Heart right ventricle (tissue), 16 donors: ENCODE measurements at regions of chr9 and their contacts with region 1.

Region 1: GRCh38 chr9:26892251-26893029 is at the start of gene CAAP1:
- DNase-seq: peak; percentile 92 to 94
- ATAC-seq: peak; percentile 99 to 100 (median 99)
- H3K4me3 ChIP-seq: peak within 1 kb of the TSS; percentile 66 to 99 (median 94)
- H3K27ac ChIP-seq: peak within 1 kb of the TSS; percentile 75 to 100 (median 96)
- H3K4me1 ChIP-seq: peaks cover 0 to 36% (median 22%) of the 10 kb centered on the region in 9 donors
- H3K27me3 ChIP-seq: no peaks in the 10 kb centered on the region
- CTCF ChIP-seq: peak in 6 of 9 donors; percentile 28 to 61 (median 50)
- total RNA-seq, gene CAAP1: 4.1 to 9.9 (median 7.6) TPM

Region 2: DNA sequence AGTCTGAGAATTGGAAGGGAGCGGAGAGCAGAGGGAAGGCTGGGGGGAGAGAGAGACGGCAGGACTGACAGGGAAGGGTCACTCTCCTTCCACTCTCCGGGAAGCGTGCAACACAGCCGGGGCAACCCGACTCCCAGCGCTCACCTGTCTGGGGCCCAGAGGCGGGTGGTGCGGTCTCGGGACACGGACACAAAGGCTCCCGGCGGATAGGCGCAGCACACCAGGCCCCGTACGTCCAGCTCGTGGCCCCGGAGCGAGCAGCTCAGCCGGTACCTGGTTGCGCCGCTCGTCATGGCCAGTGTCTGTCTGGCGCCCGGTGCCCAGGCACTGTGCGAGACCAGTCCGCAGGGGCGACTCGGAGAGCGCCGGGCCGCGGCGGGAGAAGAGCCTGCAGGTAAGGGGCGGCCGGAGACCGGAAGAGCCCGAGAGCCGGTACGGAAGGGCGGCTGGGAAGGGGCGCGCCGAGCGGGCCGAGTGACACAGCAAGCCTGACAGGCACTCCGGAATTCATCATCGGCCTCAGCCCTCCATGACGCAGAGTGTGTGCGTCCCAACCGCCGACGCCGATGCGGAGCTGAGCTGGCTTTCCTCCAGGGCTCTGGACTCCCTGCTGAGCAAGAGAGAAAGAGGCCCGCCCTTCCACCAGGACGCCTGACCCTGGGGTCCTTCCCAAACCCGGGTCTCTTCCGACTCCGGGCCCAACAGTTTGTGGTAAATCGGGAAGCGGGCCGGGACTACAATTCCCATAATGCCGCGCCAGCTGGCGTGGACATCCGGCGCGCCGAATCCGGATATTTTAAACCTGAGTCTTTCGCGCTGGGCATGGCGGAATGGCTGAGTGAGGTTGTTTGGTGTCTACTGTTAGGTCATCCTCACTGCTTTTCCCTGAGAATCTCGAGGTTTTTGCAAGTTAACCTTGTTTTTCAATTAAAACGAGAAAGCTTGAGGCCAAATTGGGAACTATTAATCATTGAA is 54.6 kb after region 1 on chr9 and contains the start of gene PLAA:
- intact Hi-C with region 1: loop called in 8 of 10 experiments (anchors 1 to 10 kb)
- DNase-seq: peak; percentile 85 to 91
- ATAC-seq: peak; percentile 99 to 100 (median 100)
- H3K4me3 ChIP-seq: peak within 1 kb of the TSS; percentile 74 to 99 (median 94)
- H3K27ac ChIP-seq: peak within 1 kb of the TSS; percentile 91 to 99 (median 96)
- H3K4me1 ChIP-seq: peaks cover 0 to 41% (median 36%) of the 10 kb centered on the region in 9 donors
- H3K27me3 ChIP-seq: no peaks in the 10 kb centered on the region
- CTCF ChIP-seq: peak in 3 of 9 donors; percentile 25 to 36 (median 27)
- total RNA-seq, gene PLAA: 30.9 to 40.4 (median 34.9) TPM

Region 3: GRCh38 chr9:26955921-26956859 is 63.8 kb after region 1 on chr9 and contains the start of gene IFT74:
- intact Hi-C with region 1: loop called in 2 of 10 experiments (anchors 5 to 10 kb)
- DNase-seq: peak; percentile 97 to 99
- ATAC-seq: peak; percentile 100
- H3K4me3 ChIP-seq: peak within 1 kb of the TSS; percentile 38 to 82 (median 62)
- H3K27ac ChIP-seq: peak within 1 kb of the TSS; percentile 4 to 94 (median 82)
- H3K4me1 ChIP-seq: peaks cover 0 to 26% (median 18%) of the 10 kb centered on the region in 9 donors
- H3K27me3 ChIP-seq: no peaks in the 10 kb centered on the region
- CTCF ChIP-seq: no peak
- total RNA-seq, gene IFT74: 7.3 to 13.4 (median 11.0) TPM